CD4-positive, alpha-beta T cell (primary cell): ENCODE measurements at regions of chr13 and their contacts with region 1.

Region 1: GRCh38 chr13:76903544-76904162 is 17.4 kb upstream of the KCTD12 start:
- DNase-seq: peak; percentile 48 to 83 (median 56)
- ATAC-seq: peak; percentile 91
- H3K4me3 ChIP-seq: no peak overlapping the region
- H3K4me3 Mint-ChIP-seq: no peak overlapping the region
- H3K27ac ChIP-seq: no peak overlapping the region
- H3K27ac Mint-ChIP-seq: no peak overlapping the region
- H3K4me1 ChIP-seq: no peaks in the 10 kb centered on the region
- H3K4me1 Mint-ChIP-seq: no peaks in the 10 kb centered on the region
- H3K27me3 ChIP-seq: no peaks in the 10 kb centered on the region
- H3K27me3 Mint-ChIP-seq: peaks cover 5% of the 10 kb centered on the region
- CTCF ChIP-seq: peak; percentile 99

Region 2: GRCh38 chr13:75696746-75697145 is 1206.9 kb before region 1 on chr13:
- CTCF ChIA-PET with region 1: interaction called, 12 read pairs
- POLR2A ChIA-PET with region 1: no interaction called
- intact Hi-C with region 1: loop called (anchors 1 to 2 kb)
- DNase-seq: no peak
- ATAC-seq: no peak
- H3K4me3 ChIP-seq: no peak overlapping the region
- H3K4me3 Mint-ChIP-seq: no peak overlapping the region
- H3K27ac ChIP-seq: no peak overlapping the region
- H3K27ac Mint-ChIP-seq: no peak overlapping the region
- H3K4me1 ChIP-seq: no peaks in the 10 kb centered on the region
- H3K4me1 Mint-ChIP-seq: no peaks in the 10 kb centered on the region
- H3K27me3 ChIP-seq: no peaks in the 10 kb centered on the region
- H3K27me3 Mint-ChIP-seq: no peaks in the 10 kb centered on the region
- CTCF ChIP-seq: no peak

Region 3: DNA sequence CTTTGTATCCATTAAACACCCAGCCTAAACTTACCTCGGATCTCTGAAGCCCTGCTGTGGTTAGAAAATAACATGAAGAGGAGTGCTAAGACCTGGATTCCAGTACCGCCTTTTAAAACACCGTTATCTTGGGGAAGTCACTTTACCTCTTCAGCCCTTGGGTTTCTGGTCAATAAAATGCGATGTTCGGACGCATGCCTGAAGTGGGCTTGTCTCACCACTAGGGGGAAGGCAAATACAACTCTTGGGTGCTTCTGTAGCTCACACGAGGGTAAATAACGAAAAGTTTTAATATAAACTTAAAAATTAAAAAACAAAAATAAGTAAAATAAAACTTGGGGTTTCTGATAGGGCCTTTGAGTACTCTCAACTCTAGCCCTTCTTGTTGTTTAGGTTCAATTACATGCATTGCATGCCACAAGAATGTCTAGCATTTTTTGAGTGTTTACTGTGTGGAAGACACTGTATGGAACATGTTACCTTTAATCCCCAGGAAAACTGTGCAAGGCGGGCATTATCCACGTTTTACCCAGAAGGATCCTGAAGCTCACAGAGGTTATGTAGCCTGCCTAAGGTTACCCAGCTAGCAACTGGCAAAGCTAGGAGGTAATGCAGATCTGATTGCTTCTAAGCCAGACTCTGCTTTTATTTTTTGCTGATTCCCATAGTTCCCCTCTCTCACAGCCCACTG is 1027.1 kb before region 1 on chr13:
- CTCF ChIA-PET with region 1: interaction called, 11 read pairs
- POLR2A ChIA-PET with region 1: no interaction called
- intact Hi-C with region 1: loop called in 1 of 2 experiments (anchors 2 kb)
- DNase-seq: peak; percentile 13 to 76 (median 32)
- ATAC-seq: peak; percentile 93
- H3K4me3 ChIP-seq: no peak overlapping the region
- H3K4me3 Mint-ChIP-seq: peak overlapping the region; percentile 52
- H3K27ac ChIP-seq: no peak overlapping the region
- H3K27ac Mint-ChIP-seq: no peak overlapping the region
- H3K4me1 ChIP-seq: peaks cover 10% of the 10 kb centered on the region
- H3K4me1 Mint-ChIP-seq: peaks cover 15% of the 10 kb centered on the region
- H3K27me3 ChIP-seq: no peaks in the 10 kb centered on the region
- H3K27me3 Mint-ChIP-seq: peaks cover 4% of the 10 kb centered on the region
- CTCF ChIP-seq: peak; percentile 89

Region 4: GRCh38 chr13:76667551-76667950 is 236.1 kb before region 1 on chr13:
- CTCF ChIA-PET with region 1: interaction called, 6 read pairs
- POLR2A ChIA-PET with region 1: interaction called, 4 read pairs
- intact Hi-C with region 1: loop called (anchors 1 kb)
- DNase-seq: peak in 5 of 14 experiments; percentile 4 to 44 (median 20)
- ATAC-seq: no peak
- H3K4me3 ChIP-seq: no peak overlapping the region
- H3K4me3 Mint-ChIP-seq: no peak overlapping the region
- H3K27ac ChIP-seq: no peak overlapping the region
- H3K27ac Mint-ChIP-seq: no peak overlapping the region
- H3K4me1 ChIP-seq: no peaks in the 10 kb centered on the region
- H3K4me1 Mint-ChIP-seq: no peaks in the 10 kb centered on the region
- H3K27me3 ChIP-seq: no peaks in the 10 kb centered on the region
- H3K27me3 Mint-ChIP-seq: no peaks in the 10 kb centered on the region
- CTCF ChIP-seq: peak; percentile 30

Region 5: DNA sequence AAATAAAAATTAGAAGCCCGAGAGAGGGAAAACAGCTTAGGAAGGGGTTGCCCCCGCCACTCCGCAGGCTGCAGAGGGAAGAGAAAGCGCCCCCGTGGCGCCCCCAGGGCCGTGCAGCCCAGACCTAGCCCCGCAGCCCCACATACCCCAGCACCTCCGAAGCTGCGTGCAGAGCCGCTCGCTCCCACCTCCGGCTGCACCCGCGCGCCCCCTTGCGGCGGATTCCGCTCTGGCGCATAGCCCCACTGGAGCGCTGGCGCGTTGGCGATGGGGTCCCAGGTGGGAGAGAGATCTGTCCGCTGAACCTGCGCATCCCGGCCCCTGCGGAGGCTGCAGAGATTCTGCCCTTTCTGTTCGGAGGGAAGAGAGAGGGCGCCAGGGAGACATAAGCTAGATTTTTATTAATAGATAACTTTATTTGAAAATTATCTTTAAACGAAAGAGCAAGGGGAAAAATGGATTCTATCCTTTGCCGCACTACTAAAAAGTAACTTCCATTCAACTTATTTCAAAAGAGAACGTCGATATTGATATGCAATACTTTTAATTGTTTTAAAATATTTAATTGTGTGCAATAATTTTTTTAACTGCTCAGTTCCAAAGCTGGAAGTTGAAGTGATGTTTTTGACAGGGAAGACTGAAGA is 76.5 kb after region 1 on chr13:
- CTCF ChIA-PET with region 1: interaction called, 4 read pairs
- POLR2A ChIA-PET with region 1: no interaction called
- intact Hi-C with region 1: loop called in 1 of 2 experiments (anchors 5 kb)
- DNase-seq: peak; percentile 74 to 92 (median 84)
- ATAC-seq: peak; percentile 99
- H3K4me3 ChIP-seq: peak overlapping the region; percentile 16
- H3K4me3 Mint-ChIP-seq: peak overlapping the region; percentile 28
- H3K27ac ChIP-seq: no peak overlapping the region
- H3K27ac Mint-ChIP-seq: no peak overlapping the region
- H3K4me1 ChIP-seq: peaks cover 23% of the 10 kb centered on the region
- H3K4me1 Mint-ChIP-seq: peaks cover 12% of the 10 kb centered on the region
- H3K27me3 ChIP-seq: peaks cover 11 to 28% of the 10 kb centered on the region in 2 experiments
- H3K27me3 Mint-ChIP-seq: peaks cover 37% of the 10 kb centered on the region
- CTCF ChIP-seq: peak; percentile 99

Region 6: DNA sequence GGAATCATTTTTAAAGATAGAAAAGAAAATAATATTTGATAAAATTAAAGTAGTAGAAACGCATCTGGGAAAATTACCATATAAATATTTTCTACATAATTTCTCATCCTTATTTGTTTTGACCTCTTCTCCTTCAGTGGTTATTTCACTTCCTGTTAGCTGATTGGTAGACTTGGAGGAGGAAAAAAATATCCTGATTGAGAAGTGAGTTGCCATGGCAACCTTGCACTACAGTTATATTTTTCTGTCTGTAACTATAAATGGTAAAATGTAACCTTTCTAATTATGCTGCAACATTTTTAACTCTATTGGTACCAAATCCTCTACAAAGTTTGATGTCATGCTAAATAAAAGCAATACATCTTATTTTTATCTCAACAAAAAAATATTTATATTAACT is 677.1 kb after region 1 on chr13:
- CTCF ChIA-PET with region 1: no interaction called
- POLR2A ChIA-PET with region 1: no interaction called
- intact Hi-C with region 1: no loop called
- DNase-seq: no peak
- ATAC-seq: no peak
- H3K4me3 ChIP-seq: no peak overlapping the region
- H3K4me3 Mint-ChIP-seq: no peak overlapping the region
- H3K27ac ChIP-seq: no peak overlapping the region
- H3K27ac Mint-ChIP-seq: no peak overlapping the region
- H3K4me1 ChIP-seq: no peaks in the 10 kb centered on the region
- H3K4me1 Mint-ChIP-seq: no peaks in the 10 kb centered on the region
- H3K27me3 ChIP-seq: peaks cover 0 to 10% of the 10 kb centered on the region in 2 experiments
- H3K27me3 Mint-ChIP-seq: peaks cover 41% of the 10 kb centered on the region
- CTCF ChIP-seq: no peak